ENCODE measurements at regions of chr6 and their contacts with region 1.

Region 1: GRCh38 chr6:23953976-23954375 is 172.0 kb upstream of the NRSN1 start:
- DNase-seq: no peak
- ATAC-seq: no peak
- H3K4me3 ChIP-seq: no peak overlapping the region
- H3K27ac ChIP-seq: no peak overlapping the region
- H3K4me1 ChIP-seq: no peaks in the 10 kb centered on the region
- H3K27me3 ChIP-seq: no peaks in the 10 kb centered on the region
- CTCF ChIP-seq: no peak
- POLR2A ChIP-seq: no peak

Region 2: DNA sequence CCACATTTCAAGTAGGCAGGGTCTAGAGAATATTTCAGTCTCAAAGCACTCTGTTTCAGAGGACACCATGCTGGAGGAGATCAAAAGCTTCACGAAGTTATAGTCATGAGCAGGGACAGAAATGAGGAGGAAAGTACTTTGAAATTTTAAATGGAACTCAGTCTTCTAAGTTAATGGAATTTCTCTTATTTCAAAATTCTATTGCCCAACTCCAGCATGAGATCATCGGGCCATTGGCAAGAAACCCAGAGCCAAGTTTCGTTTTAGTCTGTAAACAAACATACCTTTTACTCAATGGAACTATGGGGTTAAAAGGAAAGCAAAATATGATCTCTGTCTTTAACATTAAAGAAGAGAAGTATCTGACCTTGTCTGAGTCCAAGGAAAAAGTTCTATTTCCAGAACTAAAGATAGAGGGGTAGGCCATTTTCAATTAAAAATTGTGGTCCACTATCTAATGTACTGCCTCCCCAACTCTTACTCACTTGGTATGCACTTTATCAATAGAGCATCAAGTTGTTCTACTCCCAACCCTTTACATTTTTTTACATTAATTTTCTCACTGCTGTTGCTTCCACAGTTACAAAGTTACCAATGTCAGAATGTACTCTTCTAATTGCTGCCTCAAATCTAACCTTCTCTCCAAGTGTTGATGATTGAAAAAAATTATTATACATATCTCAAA is 63.3 kb before region 1 on chr6:
- intact Hi-C with region 1: loop called (anchors 10 kb)
- DNase-seq: peak in 1 of 4 donors; percentile 2
- ATAC-seq: no peak
- H3K4me3 ChIP-seq: no peak overlapping the region
- H3K27ac ChIP-seq: peak overlapping the region in 1 of 4 donors; percentile 33
- H3K4me1 ChIP-seq: no peaks in the 10 kb centered on the region
- H3K27me3 ChIP-seq: no peaks in the 10 kb centered on the region
- CTCF ChIP-seq: no peak
- POLR2A ChIP-seq: no peak

Region 3: DNA sequence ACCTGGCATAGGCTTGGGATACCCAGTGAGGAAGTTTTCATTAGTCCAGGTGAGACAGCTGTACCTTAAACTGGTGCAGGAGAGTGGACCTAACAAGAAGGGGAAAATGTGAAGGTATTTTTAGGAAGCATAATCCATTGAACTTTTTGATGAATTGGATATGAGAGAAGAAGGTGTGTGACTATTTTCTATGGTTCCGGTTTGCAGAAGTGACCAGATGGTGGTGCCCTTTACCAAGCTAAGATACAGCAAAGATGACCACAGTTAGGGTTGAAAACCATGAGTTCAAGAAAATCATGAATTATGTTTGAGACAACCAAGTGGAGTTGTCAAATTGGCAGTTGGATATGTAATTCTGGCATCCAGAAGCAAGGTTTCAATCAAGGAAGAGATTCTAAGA is 110.1 kb after region 1 on chr6:
- intact Hi-C with region 1: no loop called
- DNase-seq: peak in 2 of 4 donors; percentile 5 to 11
- ATAC-seq: no peak
- H3K4me3 ChIP-seq: no peak overlapping the region
- H3K27ac ChIP-seq: no peak overlapping the region
- H3K4me1 ChIP-seq: no peaks in the 10 kb centered on the region
- H3K27me3 ChIP-seq: no peaks in the 10 kb centered on the region
- CTCF ChIP-seq: peak in 5 of 7 experiments; percentile 19 to 53 (median 37)
- POLR2A ChIP-seq: no peak